Calu3 (cell line): ENCODE measurements at regions of chr3 and their contacts with region 1.

Region 1: GRCh38 chr3:20739814-20740213 is 553.8 kb upstream of the SGO1 start:
- DNase-seq: no peak
- H3K4me3 Mint-ChIP-seq: no peak overlapping the region
- H3K27ac Mint-ChIP-seq: no peak overlapping the region
- H3K4me1 Mint-ChIP-seq: no peaks in the 10 kb centered on the region
- H3K27me3 Mint-ChIP-seq: no peaks in the 10 kb centered on the region
- CTCF ChIP-seq: no peak

Region 2: GRCh38 chr3:20683910-20684309 is 55.9 kb before region 1 on chr3:
- CTCF ChIA-PET with region 1: no interaction called
- intact Hi-C with region 1: loop called (anchors 5 kb)
- DNase-seq: no peak
- H3K4me3 Mint-ChIP-seq: no peak overlapping the region
- H3K27ac Mint-ChIP-seq: no peak overlapping the region
- H3K4me1 Mint-ChIP-seq: peaks cover 40% of the 10 kb centered on the region
- H3K27me3 Mint-ChIP-seq: no peaks in the 10 kb centered on the region
- CTCF ChIP-seq: no peak

Region 3: DNA sequence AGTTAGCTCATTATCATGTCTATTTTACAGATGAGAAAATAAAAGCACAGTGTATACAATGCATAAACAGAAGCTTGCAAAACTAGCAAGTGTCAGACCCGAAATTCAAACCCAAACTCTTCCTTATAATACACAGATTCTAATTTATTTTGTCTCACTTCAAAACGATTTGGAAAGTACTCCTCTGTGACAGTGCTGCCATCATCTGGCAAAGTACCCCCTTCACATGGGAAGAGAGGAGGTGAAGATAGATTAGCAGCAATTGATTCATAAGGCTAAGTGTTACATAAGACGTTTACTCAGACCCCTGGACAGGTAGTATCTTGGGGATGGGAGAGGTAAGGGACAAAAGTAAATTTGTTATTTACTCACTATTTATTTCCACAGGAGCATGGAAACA is 190.2 kb after region 1 on chr3:
- CTCF ChIA-PET with region 1: no interaction called
- intact Hi-C with region 1: loop called (anchors 2 kb)
- DNase-seq: peak; percentile 45
- H3K4me3 Mint-ChIP-seq: no peak overlapping the region
- H3K27ac Mint-ChIP-seq: no peak overlapping the region
- H3K4me1 Mint-ChIP-seq: peaks cover 19% of the 10 kb centered on the region
- H3K27me3 Mint-ChIP-seq: no peaks in the 10 kb centered on the region
- CTCF ChIP-seq: peak; percentile 27

Region 4: DNA sequence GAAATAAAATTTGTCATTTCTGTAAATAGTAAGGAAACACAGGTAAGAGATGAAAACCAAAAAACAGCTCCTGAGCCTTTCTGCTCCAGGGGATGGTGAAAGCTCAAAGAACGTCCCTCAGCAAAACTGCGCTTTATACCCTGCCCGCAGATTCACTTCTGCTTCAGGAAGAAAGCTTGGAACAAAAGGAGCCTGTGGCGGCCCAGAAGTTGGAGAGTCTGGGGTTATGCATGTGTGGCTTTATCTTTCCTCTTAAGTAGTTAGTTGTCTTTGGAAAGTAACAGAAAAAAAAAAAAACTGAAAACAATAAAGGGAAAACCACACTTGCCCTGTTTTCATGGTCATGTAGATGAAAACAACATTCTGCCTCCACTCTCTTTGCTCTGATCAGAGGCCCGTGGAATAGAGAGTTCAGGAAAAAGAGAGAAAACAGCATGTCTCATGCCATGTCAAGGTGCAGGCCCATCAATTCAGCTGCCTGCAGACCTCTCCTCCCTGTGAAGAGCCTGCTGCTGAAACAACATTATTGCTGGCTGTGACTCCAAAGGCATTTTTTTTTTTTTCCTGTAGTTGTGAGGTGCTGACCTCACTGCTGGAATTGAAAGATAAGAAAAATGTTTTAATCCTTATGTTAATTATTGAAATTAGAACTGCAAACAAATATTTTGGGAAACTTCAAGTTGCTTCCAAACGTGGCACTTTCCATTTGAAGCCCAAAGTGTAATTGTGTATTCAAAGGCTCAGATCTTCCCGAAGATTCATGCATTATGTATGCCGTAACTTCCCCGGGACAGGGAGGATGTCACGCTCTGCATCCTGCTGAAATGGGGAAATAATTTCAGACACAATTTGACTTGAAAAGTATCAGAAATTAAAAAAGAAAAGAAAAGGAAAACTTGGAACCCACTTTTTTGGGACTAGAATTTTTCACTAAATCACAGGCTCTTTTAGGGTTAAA is 1119.6 kb after region 1 on chr3:
- CTCF ChIA-PET with region 1: no interaction called
- intact Hi-C with region 1: no loop called
- DNase-seq: no peak
- H3K4me3 Mint-ChIP-seq: no peak overlapping the region
- H3K27ac Mint-ChIP-seq: no peak overlapping the region
- H3K4me1 Mint-ChIP-seq: no peaks in the 10 kb centered on the region
- H3K27me3 Mint-ChIP-seq: no peaks in the 10 kb centered on the region
- CTCF ChIP-seq: no peak